K562 (cell line): ENCODE measurements at regions of chr6 and their contacts with region 1.

Region 1: GRCh38 chr6:24658573-24659511 is 7.9 kb downstream of the TDP2 start:
- DNase-seq: peak in 2 of 4 experiments; percentile 76 to 77
- ATAC-seq: peak; percentile 96
- H3K4me3 ChIP-seq: no peak overlapping the region
- H3K27ac ChIP-seq: peak overlapping the region; percentile 69
- H3K4me1 ChIP-seq: peaks cover 0 to 20% of the 10 kb centered on the region in 2 experiments; a peak in 2 of 5 replicates
- H3K27me3 ChIP-seq: no peaks in the 10 kb centered on the region
- CTCF ChIP-seq: no peak
- EP300 ChIP-seq: peak; percentile 75
- POLR2A ChIP-seq: peak; percentile 44
- RAD21 ChIP-seq: no peak

Region 2: DNA sequence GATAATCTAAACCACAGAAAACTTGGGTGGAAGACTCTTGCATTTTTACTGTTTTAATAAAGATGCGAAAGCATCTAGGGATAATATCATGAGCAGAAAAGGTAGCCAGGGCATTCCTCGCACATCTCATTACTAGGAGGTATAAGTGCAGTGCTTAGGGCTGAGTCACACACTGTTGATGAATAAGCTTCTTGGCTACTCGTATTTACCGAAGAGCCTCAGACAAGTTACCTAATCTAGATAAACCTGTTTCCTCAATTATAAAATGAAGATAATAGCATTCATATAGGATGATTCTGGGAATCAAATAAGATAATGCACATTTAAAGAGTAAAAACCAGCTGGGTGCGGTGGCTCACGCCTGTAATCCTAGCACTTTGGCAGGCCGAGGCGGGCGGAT is 12.1 kb before region 1 on chr6:
- CTCF ChIA-PET with region 1: no interaction called
- POLR2A ChIA-PET with region 1: interaction called, 14 read pairs
- in situ Hi-C with region 1: no loop called
- intact Hi-C with region 1: no loop called
- DNase-seq: no peak
- ATAC-seq: no peak
- H3K4me3 ChIP-seq: no peak overlapping the region
- H3K27ac ChIP-seq: no peak overlapping the region
- H3K4me1 ChIP-seq: peaks cover 7 to 11% of the 10 kb centered on the region in 2 experiments; a peak in 4 of 5 replicates
- H3K27me3 ChIP-seq: peaks cover 8 to 10% of the 10 kb centered on the region in 2 experiments; a peak in 3 of 5 replicates
- CTCF ChIP-seq: no peak
- EP300 ChIP-seq: no peak
- POLR2A ChIP-seq: no peak
- RAD21 ChIP-seq: no peak

Region 3: DNA sequence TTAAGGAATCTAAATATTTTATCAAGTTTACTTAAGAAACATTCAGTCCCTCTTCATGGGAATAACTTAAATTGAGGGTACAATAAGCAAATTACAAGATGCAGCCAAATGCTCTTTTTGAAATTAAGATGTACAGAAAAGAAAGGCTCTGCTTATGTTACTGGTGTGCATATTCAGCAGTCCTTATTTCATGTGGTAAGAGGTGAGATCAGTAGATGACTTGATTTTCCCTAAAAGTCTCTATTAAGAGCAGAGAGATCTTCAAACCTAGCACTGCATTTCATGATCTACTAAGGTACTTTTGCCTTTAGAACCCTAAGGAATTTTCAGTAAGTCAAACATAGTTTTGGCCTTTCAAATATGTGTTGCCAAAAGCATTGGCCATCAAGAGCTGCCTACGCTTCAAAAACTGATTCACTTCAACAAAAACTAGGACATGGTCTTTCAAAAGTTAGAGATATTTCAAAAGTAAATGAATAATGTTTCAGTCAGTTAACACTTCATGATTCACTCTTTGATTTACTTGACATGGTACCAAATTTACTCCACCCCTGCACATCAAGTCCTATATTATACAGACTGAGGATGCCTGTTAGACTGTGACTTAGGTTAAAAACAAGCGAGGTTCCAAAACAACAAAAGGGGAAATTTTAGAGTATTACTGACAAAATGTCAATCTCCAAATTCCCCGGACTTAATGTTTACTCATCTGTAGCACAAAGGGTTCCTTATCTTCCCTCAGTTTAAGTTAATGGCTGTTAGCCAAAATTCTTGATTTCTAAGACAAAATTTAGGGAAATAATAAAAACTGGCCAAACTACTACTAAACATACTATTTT is 40.9 kb after region 1 on chr6:
- CTCF ChIA-PET with region 1: no interaction called
- POLR2A ChIA-PET with region 1: no interaction called
- in situ Hi-C with region 1: no loop called
- intact Hi-C with region 1: no loop called
- DNase-seq: no peak
- ATAC-seq: no peak
- H3K4me3 ChIP-seq: no peak overlapping the region
- H3K27ac ChIP-seq: no peak overlapping the region
- H3K4me1 ChIP-seq: no peaks in the 10 kb centered on the region
- H3K27me3 ChIP-seq: no peaks in the 10 kb centered on the region
- CTCF ChIP-seq: no peak
- EP300 ChIP-seq: no peak
- POLR2A ChIP-seq: no peak
- RAD21 ChIP-seq: no peak